ENCODE measurements at regions of chr3 and their contacts with region 1.

Region 1: DNA sequence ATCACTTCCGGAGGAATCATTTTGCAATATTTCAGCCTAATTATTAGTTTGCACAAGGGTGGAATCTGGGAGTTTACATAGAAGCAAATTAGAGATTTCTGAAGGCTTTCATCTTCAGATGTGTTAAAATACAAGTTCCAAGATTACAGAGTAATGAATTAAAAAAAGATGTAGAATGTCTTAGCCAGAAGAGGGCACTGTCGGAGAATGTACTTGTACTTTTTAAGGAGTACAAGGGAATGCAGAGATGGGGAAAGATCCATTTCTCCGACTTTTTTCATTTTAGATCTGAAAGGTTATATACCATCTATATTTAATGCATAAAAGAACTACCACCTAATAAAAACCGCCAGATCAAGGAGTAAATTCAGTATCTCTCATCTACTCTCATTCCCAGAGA is 43.1 kb upstream of the WDR5B start:
- DNase-seq: peak; percentile 23
- ATAC-seq: peak; percentile 61; the same call in 1 of the 2 replicates
- H3K4me3 ChIP-seq: no peak overlapping the region
- H3K27ac ChIP-seq: no peak overlapping the region
- H3K4me1 ChIP-seq: no peaks in the 10 kb centered on the region
- H3K27me3 ChIP-seq: no peaks in the 10 kb centered on the region
- CTCF ChIP-seq: peak; percentile 25 to 55 (median 48); a peak in 4 of 6 replicates
- POLR2A ChIP-seq: no peak
- RAD21 ChIP-seq: peak; percentile 77

Region 2: DNA sequence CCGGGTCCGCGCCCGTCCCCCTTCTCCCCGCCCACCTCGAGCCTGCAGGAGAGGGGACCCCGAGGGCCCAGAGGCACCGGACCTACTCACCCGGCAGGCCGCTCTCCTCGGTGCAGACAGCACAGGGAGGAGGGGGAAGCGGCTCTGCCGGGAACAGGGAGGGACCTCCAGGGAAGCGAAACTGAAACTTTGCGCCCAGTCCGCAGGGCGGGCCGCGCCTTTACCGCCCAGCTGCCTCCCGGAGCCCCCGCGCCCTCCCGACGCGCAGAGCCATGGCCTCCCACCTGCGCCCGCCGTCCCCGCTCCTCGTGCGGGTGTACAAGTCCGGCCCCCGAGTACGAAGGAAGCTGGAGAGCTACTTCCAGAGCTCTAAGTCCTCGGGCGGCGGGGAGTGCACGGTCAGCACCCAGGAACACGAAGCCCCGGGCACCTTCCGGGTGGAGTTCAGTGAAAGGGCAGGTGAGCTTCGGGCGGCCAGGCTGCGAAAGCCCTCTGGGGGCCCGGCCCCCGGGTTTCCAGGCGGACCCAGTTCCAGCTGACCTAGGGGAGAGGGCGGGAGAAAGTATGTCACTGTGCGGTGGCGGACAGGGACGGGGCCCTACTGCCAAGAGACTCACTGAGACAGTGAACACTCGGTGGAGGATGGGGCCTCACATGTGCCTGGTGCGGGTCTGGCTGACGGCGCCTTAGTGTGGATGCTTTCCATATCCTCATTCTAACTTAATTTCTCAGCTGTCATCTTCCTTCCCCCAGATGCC is 105.3 kb after region 1 on chr3 and contains the starts of genes DTX3L and PARP9:
- CTCF ChIA-PET with region 1: no interaction called
- POLR2A ChIA-PET with region 1: no interaction called
- RAD21 ChIA-PET with region 1: no interaction called
- intact Hi-C with region 1: loop called (anchors 5 kb)
- DNase-seq: no peak
- ATAC-seq: peak; percentile 86
- H3K4me3 ChIP-seq: peak within 1 kb of the TSS; percentile 60 to 81
- H3K27ac ChIP-seq: peak within 1 kb of the TSS; percentile 72
- H3K4me1 ChIP-seq: peaks cover 8 to 17% of the 10 kb centered on the region in 2 experiments
- H3K27me3 ChIP-seq: no peaks in the 10 kb centered on the region
- CTCF ChIP-seq: no peak
- POLR2A ChIP-seq: peak; percentile 32
- RAD21 ChIP-seq: no peak
- total RNA-seq, gene DTX3L: 13.1 TPM
- total RNA-seq, gene PARP9: 9.5 TPM

Region 3: DNA sequence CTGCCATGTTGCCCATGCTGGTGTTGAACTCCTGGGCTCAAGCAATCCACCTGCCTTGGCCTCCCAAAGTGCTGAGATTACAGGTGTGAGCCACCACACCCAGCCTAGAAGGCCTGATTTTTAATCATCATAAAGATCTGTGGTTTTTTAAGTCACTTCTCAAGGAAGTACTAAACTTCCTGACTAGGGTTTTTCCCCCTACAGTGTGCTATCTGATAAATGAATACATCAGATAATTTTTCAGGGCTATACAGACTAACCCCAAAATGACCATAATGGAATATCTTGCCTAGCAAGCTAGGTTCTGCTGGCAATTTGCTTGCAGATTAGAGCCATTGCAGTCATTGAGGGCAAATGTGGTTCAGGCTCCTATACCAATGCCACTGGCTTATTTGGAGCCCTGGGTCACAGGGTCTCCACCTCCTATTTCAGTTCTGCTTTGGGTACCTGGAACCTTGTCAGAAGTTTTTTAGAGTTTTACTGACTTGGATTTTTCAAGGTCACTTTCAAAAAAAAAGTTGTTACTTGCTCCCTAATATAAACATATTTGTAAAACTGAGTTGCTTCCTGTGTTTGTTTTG is 416.6 kb after region 1 on chr3:
- CTCF ChIA-PET with region 1: no interaction called
- POLR2A ChIA-PET with region 1: no interaction called
- RAD21 ChIA-PET with region 1: no interaction called
- intact Hi-C with region 1: no loop called
- DNase-seq: no peak
- ATAC-seq: no peak
- H3K4me3 ChIP-seq: no peak overlapping the region
- H3K27ac ChIP-seq: no peak overlapping the region
- H3K4me1 ChIP-seq: no peaks in the 10 kb centered on the region
- H3K27me3 ChIP-seq: no peaks in the 10 kb centered on the region
- CTCF ChIP-seq: no peak
- POLR2A ChIP-seq: no peak
- RAD21 ChIP-seq: no peak